A549 (cell line): ENCODE measurements at regions of chrX and their contacts with region 1.

Region 1: GRCh38 chrX:49137492-49137891 is 14.0 kb upstream of the GPKOW start:
- DNase-seq: no peak
- ATAC-seq: no peak
- H3K4me3 ChIP-seq: no peak overlapping the region
- H3K27ac ChIP-seq: no peak overlapping the region
- H3K4me1 ChIP-seq: peaks cover 16% of the 10 kb centered on the region
- CTCF ChIP-seq: no peak
- EP300 ChIP-seq: no peak
- POLR2A ChIP-seq: no peak
- RAD21 ChIP-seq: no peak

Region 2: GRCh38 chrX:49163555-49164419 is 26.3 kb after region 1 on chrX:
- CTCF ChIA-PET with region 1: interaction called, 17 read pairs
- POLR2A ChIA-PET with region 1: no interaction called
- DNase-seq: peak; percentile 72 to 91
- ATAC-seq: peak; percentile 88 to 89
- H3K4me3 ChIP-seq: peak overlapping the region; percentile 48
- H3K27ac ChIP-seq: peak overlapping the region; percentile 90 to 92
- H3K4me1 ChIP-seq: peaks cover 8% of the 10 kb centered on the region; the same call in 2 of the 3 replicates
- CTCF ChIP-seq: peak; percentile 81
- EP300 ChIP-seq: no peak
- POLR2A ChIP-seq: peak; percentile 25; the same call in 1 of the 2 replicates
- RAD21 ChIP-seq: peak; percentile 46 to 70; a peak in 4 of 5 replicates